Activated naive CD4-positive, alpha-beta T cell treated with anti-CD3 and anti-CD28 coated beads for 36 hours (primary cell): ENCODE measurements at regions of chr1 and their contacts with region 1.

Region 1: GRCh38 chr1:55337801-55338447 is 122.8 kb upstream of the USP24 start:
- DNase-seq: peak; percentile 38
- H3K4me3 Mint-ChIP-seq: no peak overlapping the region
- H3K27ac Mint-ChIP-seq: no peak overlapping the region
- H3K4me1 Mint-ChIP-seq: no peaks in the 10 kb centered on the region
- H3K27me3 Mint-ChIP-seq: no peaks in the 10 kb centered on the region

Region 2: GRCh38 chr1:54950369-54951163 is 387.4 kb before region 1 on chr1:
- CTCF ChIA-PET with region 1: no interaction called
- intact Hi-C with region 1: loop called (anchors 1 kb)
- DNase-seq: peak; percentile 81
- H3K4me3 Mint-ChIP-seq: no peak overlapping the region
- H3K27ac Mint-ChIP-seq: no peak overlapping the region
- H3K4me1 Mint-ChIP-seq: no peaks in the 10 kb centered on the region
- H3K27me3 Mint-ChIP-seq: no peaks in the 10 kb centered on the region

Region 3: DNA sequence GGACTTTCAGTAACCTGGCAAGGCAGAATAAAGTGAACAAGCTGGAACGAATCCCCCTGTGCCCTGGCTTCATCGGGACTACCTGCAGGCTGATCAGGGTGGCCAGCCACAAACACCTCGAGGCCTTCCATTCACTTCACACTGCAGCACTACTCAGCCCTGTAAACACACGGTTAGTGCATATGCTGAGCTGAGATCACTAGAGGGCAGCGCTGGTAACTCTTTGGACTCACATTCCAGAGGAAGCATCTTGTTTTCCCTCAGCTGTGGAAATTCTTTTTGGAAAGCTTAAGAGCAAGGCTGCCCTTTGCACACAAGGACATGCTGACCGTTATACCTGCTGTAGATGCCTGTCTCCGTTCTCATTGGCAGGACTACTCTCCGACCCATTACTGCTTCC is 266.4 kb before region 1 on chr1:
- CTCF ChIA-PET with region 1: no interaction called
- intact Hi-C with region 1: loop called (anchors 1 kb)
- DNase-seq: peak; percentile 39
- H3K4me3 Mint-ChIP-seq: no peak overlapping the region
- H3K27ac Mint-ChIP-seq: no peak overlapping the region
- H3K4me1 Mint-ChIP-seq: peaks cover 16% of the 10 kb centered on the region
- H3K27me3 Mint-ChIP-seq: no peaks in the 10 kb centered on the region

Region 4: DNA sequence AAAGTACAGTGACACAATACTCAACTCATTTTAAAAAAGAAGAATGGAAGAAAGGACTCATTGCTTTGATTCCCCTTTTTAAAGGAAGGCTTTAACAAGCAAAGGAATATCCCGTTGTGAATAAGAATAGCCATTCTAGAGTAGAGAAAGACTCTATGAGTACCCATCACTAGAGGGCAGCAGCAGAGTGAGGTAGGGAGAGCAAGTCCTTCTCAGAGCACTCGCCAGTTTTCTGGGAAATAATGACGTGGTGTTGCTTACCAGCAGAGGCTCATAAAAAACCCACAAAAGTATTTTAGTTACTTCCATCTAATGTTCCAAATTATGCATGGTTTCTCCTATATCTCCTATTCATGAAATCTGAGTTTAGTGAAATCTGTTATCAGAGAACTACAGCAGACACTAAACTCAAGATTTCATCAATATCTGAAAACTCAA is 197.4 kb before region 1 on chr1:
- CTCF ChIA-PET with region 1: interaction called, 6 read pairs
- intact Hi-C with region 1: loop called (anchors 1 kb)
- DNase-seq: peak; percentile 89
- H3K4me3 Mint-ChIP-seq: no peak overlapping the region
- H3K27ac Mint-ChIP-seq: peak overlapping the region; percentile 81
- H3K4me1 Mint-ChIP-seq: peaks cover 15% of the 10 kb centered on the region
- H3K27me3 Mint-ChIP-seq: no peaks in the 10 kb centered on the region

Region 5: DNA sequence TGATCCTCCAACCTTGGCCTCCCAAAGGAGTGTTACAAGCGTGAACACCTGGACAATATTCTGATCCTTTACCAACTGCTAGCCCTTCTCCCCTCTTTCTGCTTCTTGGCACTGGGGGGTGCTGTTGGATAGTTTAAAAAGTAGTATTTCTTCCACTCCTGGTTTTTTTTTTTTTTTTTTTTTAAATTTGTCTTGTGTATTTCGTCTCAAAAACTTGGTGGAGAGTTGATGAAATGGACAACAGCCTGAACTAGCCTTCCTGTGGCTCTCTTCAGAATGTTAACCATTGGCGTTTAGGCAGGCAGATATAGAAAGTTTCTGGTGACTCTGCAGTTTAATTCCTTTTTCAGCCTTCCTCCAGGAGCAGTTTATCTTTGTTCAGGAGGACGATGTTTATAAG is 53.1 kb before region 1 on chr1:
- CTCF ChIA-PET with region 1: interaction called, 27 read pairs
- intact Hi-C with region 1: loop called (anchors 1 kb)
- DNase-seq: peak; percentile 52
- H3K4me3 Mint-ChIP-seq: no peak overlapping the region
- H3K27ac Mint-ChIP-seq: no peak overlapping the region
- H3K4me1 Mint-ChIP-seq: peaks cover 25% of the 10 kb centered on the region
- H3K27me3 Mint-ChIP-seq: peaks cover 2% of the 10 kb centered on the region

Region 6: DNA sequence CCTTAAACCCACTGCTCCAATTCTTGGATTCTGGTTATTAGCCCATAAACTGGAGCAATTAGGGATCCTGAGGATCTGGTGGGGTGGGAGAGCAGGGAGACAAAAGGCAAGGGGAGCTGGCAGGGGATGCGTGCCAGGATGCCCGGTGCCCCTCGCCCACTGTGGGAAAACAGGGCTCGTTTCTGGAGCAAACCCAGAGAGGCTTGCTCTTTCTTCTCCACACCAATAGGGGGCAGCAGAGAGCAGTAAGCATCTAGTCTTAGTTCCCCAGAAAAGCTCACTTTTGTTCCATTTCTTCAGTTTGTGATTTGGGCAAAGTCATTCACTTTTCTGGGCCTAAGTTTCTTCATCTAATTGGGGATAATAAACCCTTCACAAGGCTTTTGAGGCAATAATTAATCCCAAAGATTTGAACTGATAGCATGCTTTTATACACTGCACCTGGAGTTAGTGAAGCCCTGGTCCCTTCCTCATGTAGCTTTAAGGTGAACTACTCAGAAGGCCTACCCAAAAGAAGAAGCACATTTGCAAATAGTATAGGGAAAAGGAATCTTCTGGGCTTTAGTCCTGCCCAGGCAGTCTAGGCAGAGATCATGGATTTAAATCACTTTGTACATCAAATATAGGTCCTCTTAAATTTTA is 37.8 kb after region 1 on chr1:
- CTCF ChIA-PET with region 1: no interaction called
- intact Hi-C with region 1: no loop called
- DNase-seq: peak; percentile 56
- H3K4me3 Mint-ChIP-seq: no peak overlapping the region
- H3K27ac Mint-ChIP-seq: no peak overlapping the region
- H3K4me1 Mint-ChIP-seq: peaks cover 3% of the 10 kb centered on the region
- H3K27me3 Mint-ChIP-seq: no peaks in the 10 kb centered on the region